CD8-positive, alpha-beta T cell (primary cell): ENCODE measurements at regions of chr19 and their contacts with region 1.

Region 1: DNA sequence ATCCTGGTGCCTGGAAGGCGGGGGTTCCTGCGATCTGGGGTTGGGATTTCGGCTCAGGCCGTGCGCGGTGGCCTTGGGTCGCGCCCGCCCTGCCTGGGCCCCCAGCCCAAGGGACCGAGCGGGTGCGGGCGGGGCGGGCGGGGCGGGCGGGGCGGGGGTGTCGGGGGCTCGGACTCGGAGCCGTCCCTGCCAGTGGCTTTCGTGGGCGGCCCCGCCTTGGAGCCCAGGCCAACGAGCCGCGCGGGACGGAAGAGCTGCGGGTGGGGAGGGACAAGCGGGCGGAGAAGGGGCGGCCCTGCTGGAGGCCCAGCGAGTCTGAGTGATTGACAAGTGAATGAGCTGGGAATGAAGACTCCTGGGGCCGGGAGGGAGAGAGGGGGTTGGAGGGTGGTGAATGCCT is 24.6 kb upstream of the ZNF729 start:
- DNase-seq: no peak
- ATAC-seq: no peak
- H3K4me3 ChIP-seq: no peak overlapping the region
- H3K4me3 Mint-ChIP-seq: no peak overlapping the region
- H3K27ac ChIP-seq: no peak overlapping the region
- H3K27ac Mint-ChIP-seq: no peak overlapping the region
- H3K4me1 ChIP-seq: no peaks in the 10 kb centered on the region
- H3K4me1 Mint-ChIP-seq: no peaks in the 10 kb centered on the region
- H3K27me3 ChIP-seq: no peaks in the 10 kb centered on the region
- H3K27me3 Mint-ChIP-seq: no peaks in the 10 kb centered on the region
- CTCF ChIP-seq: no peak

Region 2: GRCh38 chr19:21505459-21506451 is 755.9 kb before region 1 on chr19 and contains the start of gene ZNF429:
- CTCF ChIA-PET with region 1: no interaction called
- POLR2A ChIA-PET with region 1: no interaction called
- intact Hi-C with region 1: no loop called
- DNase-seq: peak; percentile 81 to 96 (median 91)
- ATAC-seq: peak; percentile 98
- H3K4me3 ChIP-seq: peak within 1 kb of the TSS; percentile 75 to 78
- H3K4me3 Mint-ChIP-seq: peak within 1 kb of the TSS; percentile 100
- H3K27ac ChIP-seq: peak within 1 kb of the TSS; percentile 92 to 95
- H3K27ac Mint-ChIP-seq: peak within 1 kb of the TSS; percentile 100
- H3K4me1 ChIP-seq: peaks cover 24% of the 10 kb centered on the region
- H3K4me1 Mint-ChIP-seq: peaks cover 52% of the 10 kb centered on the region
- H3K27me3 ChIP-seq: no peaks in the 10 kb centered on the region
- H3K27me3 Mint-ChIP-seq: no peaks in the 10 kb centered on the region
- CTCF ChIP-seq: no peak
- total RNA-seq, gene ZNF429: 9.6 to 11.2 TPM

Region 3: DNA sequence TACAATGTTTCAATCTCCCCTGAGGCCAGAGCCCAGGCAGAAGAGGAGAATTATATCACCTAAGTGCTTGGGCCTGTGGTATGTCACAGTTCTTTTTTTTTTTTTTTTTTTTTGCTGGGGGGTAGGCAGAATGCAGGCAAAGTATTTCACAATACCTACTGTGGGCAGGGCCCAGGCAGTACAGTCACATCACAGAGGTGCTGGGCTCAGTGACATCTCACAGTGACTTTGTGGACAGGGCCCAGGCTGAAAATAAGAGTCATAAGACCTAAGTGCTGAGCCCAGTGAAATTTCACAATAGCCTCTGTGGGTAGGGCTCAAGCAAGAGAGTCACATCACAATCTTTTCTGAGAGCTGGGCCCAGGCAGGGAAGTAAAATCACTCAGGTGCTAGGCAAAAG is 234.9 kb before region 1 on chr19:
- CTCF ChIA-PET with region 1: no interaction called
- POLR2A ChIA-PET with region 1: no interaction called
- intact Hi-C with region 1: no loop called
- DNase-seq: no peak
- ATAC-seq: no peak
- H3K4me3 ChIP-seq: no peak overlapping the region
- H3K4me3 Mint-ChIP-seq: no peak overlapping the region
- H3K27ac ChIP-seq: no peak overlapping the region
- H3K27ac Mint-ChIP-seq: no peak overlapping the region
- H3K4me1 ChIP-seq: no peaks in the 10 kb centered on the region
- H3K4me1 Mint-ChIP-seq: no peaks in the 10 kb centered on the region
- H3K27me3 ChIP-seq: no peaks in the 10 kb centered on the region
- H3K27me3 Mint-ChIP-seq: no peaks in the 10 kb centered on the region
- CTCF ChIP-seq: no peak

Region 4: DNA sequence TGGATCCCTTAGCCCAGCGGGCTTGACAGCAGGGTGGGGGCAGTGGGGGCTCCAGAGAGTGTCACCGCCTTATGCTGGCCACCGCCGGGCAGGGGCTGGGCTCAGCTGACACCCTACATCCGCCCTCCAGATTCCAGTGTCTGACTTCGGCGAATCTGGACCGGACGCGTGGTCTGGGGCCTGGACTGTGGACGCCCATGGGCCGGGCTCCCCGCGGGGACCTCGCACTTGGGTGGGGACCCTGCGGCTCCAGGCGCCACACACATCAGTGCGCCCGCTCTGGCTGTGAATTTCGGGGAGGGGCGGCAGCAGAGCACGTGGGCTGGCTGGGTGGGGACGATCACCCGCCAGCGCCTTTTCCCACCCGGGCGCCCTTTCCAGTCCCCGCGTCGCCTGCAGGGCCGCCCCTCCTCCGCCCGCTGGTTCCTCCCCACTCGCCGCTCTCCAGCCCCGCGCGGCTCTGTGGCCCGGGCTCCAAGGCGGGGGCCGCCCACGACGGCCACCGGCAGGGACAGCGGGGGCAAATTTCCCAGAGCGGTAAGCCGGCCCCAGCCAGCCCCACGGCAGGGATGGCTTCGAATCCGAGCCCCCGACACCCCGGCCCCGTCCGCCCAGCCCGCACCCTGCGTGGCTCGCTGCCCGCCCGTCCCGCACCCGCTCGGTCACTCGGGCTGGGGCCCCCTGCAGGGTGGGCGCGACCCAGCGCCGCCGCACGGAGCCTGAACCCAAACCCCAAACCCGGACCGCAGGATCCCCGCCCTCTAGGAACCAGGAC is 545.6 kb after region 1 on chr19:
- CTCF ChIA-PET with region 1: no interaction called
- POLR2A ChIA-PET with region 1: no interaction called
- intact Hi-C with region 1: loop called in 1 of 2 experiments (anchors 5 kb)
- DNase-seq: no peak
- ATAC-seq: no peak
- H3K4me3 ChIP-seq: no peak overlapping the region
- H3K4me3 Mint-ChIP-seq: no peak overlapping the region
- H3K27ac ChIP-seq: no peak overlapping the region
- H3K27ac Mint-ChIP-seq: no peak overlapping the region
- H3K4me1 ChIP-seq: no peaks in the 10 kb centered on the region
- H3K4me1 Mint-ChIP-seq: no peaks in the 10 kb centered on the region
- H3K27me3 ChIP-seq: no peaks in the 10 kb centered on the region
- H3K27me3 Mint-ChIP-seq: no peaks in the 10 kb centered on the region
- CTCF ChIP-seq: no peak

Region 5: GRCh38 chr19:23539499-23539898 is 1277.9 kb after region 1 on chr19:
- CTCF ChIA-PET with region 1: no interaction called
- POLR2A ChIA-PET with region 1: no interaction called
- intact Hi-C with region 1: no loop called
- DNase-seq: no peak
- ATAC-seq: no peak
- H3K4me3 ChIP-seq: no peak overlapping the region
- H3K4me3 Mint-ChIP-seq: no peak overlapping the region
- H3K27ac ChIP-seq: no peak overlapping the region
- H3K27ac Mint-ChIP-seq: no peak overlapping the region
- H3K4me1 ChIP-seq: no peaks in the 10 kb centered on the region
- H3K4me1 Mint-ChIP-seq: no peaks in the 10 kb centered on the region
- H3K27me3 ChIP-seq: no peaks in the 10 kb centered on the region
- H3K27me3 Mint-ChIP-seq: no peaks in the 10 kb centered on the region
- CTCF ChIP-seq: no peak